Dorsolateral prefrontal cortex (tissue), 120 donors: ENCODE measurements at regions of chr19 and their contacts with region 1.

Region 1: DNA sequence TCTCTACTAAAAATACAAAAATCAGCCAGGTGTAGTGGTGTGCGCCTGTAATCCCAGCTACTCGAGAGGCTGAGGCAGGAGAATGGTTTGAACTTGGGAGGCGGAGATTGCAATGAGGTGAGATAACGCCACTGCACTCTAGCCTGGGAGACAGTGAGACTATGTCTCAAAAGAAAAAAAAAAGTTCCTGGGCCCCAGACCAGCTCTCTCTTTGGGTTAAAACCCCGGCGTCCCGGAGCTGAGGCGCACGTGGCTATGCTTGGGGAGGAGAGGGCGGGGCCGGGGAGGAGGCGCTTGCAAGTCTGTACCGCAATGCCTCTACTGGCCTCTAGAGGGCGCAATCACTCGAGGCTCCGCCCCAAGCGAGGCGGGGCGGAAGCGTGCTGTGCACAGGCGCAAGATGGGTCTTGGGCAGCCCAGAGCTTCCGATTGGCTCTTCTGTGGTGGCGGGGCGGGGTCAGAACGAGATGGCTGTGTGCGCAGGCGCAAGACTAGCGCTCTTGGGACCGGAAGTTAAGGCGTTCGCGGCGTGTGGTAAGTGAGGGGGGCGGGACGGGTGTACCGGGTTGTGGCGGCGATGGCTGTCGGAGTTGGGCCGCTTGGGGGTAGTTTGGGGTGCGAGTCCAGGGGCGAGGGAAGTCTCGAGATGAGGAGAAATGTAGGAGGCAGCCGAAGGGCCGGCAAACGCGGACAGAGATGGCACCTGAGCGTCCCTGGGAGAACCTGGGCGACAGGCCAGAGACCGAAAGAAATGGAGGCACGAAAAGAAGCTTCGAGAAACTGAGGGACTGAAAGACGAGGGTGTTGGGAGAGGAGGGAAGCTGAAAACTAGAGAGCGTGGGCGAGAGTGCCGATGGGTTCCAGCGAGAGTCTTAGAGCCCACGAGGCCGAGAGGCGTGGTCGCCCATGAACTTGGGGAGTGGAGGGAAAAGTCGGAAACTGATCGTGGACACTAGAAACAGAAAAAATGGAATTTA is at the start of gene DHX34:
- DNase-seq: peak; percentile 91 to 96 (median 95)
- H3K4me3 ChIP-seq: peak within 1 kb of the TSS; percentile 53 to 98 (median 86)
- H3K27ac ChIP-seq: peak within 1 kb of the TSS in 47 of 59 donors; percentile 11 to 91 (median 75)
- H3K27me3 ChIP-seq: no peaks in the 10 kb centered on the region
- CTCF ChIP-seq: peak; percentile 96 to 100 (median 99)
- total RNA-seq, gene DHX34: 9.9 to 34.7 (median 16.9) TPM

Region 2: GRCh38 chr19:47066376-47067214 is 282.5 kb before region 1 on chr19:
- intact Hi-C with region 1: no loop called
- DNase-seq: no peak
- H3K4me3 ChIP-seq: no peak overlapping the region
- H3K27ac ChIP-seq: no peak overlapping the region
- H3K27me3 ChIP-seq: no peaks in the 10 kb centered on the region
- CTCF ChIP-seq: no peak

Region 3: DNA sequence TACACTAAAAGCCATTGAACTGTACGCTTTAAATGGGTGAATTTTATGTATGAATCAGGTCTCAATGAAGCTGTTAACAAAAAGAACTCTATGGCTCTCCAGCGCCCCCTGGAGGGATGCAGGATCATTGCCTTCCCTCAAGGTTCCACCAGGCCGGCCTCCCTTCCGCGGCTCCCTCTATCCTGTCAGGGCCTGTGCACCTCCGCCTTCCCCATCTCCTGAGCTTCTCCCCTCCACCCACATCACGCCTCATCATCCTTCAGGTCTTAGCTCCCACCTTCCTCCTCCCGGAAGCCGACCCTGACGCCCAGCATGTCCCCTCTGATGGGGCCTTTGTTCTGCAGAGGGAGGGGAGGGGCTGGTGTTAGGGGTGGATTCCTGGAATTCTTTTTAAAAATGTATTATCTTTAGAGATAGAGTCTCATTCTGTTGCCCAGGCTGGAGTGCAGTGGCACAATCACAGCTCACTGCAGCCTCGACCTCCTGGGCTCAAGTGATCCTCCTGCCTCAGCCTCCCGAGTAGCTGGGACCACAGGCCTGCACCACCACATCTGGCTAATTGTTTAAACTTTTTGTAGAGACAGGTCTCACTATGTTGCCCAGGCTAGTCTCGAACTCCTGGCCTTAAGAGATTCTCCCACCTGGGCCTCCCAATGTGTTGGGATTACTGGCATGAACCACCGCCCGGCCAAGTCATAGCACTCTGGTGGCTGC is 42.6 kb after region 1 on chr19:
- intact Hi-C with region 1: loop called in 1 of 2 experiments (anchors 1 kb)
- DNase-seq: peak in 9 of 10 donors; percentile 71 to 81 (median 77)
- H3K4me3 ChIP-seq: peak overlapping the region in 11 of 59 donors; percentile 2 to 50 (median 19)
- H3K27ac ChIP-seq: no peak overlapping the region
- H3K27me3 ChIP-seq: no peaks in the 10 kb centered on the region
- CTCF ChIP-seq: peak; percentile 73 to 97 (median 92)

Region 4: GRCh38 chr19:47406711-47407416 is 57.8 kb after region 1 on chr19:
- intact Hi-C with region 1: no loop called
- DNase-seq: no peak
- H3K4me3 ChIP-seq: no peak overlapping the region
- H3K27ac ChIP-seq: no peak overlapping the region
- H3K27me3 ChIP-seq: peaks cover 0 to 40% (median 3%) of the 10 kb centered on the region in 45 donors
- CTCF ChIP-seq: no peak